Activated T-helper 1 cell treated with anti-CD3 and anti-CD28 coated beads, Interleukin-12 subunit alpha, Interleukin-12 subunit beta, Interleukin-2, Interleukin-4 antibody, amounts not matched to agents 30 ng/mL and 10 ng/mL and 1 ng/mL, durations not matched to agents 14 hours and 24 hours and 36 hours (primary cell): ENCODE measurements at regions of chr16 and their contacts with region 1.

Region 1: DNA sequence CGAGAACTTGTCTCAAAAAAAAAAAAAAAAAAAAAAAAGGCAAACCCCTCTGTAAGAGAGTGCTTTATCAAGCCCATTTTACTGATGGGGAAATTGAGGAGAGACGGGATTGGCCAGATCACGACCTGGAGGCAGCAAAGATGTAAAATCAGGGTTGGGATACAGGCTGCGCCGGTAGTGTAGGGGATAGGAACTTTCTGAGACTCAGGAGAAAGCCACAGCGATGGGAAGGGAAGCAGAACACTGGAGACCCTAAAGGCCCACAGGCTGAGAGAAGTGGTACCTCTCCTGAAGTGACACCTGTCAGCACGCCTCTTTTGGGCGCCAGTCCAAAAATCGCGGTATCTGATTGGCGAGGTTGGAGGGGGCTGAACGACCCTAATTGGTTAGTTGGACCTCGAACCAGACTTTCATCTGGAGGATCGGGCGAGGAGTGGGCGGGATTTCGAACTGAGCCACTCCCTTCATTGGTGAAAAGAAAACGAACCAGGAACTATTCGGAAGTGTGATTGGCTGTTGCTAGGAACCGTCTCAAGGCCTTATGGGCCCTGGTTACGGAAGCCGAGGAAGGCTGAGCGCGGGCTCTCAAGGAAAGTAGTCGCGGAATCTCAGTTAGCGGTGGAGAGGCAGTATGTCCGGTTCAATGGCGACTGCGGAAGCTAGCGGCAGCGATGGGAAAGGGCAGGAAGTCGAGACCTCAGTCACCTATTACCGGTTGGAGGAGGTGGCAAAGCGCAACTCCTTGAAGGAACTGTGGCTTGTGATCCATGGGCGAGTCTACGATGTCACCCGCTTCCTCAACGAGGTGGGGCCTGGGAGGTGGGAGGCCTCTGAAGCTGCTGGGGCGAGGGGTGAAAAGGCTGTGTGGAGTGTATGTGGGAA is at the start of gene CYB5B:
- DNase-seq: peak; percentile 91
- H3K4me3 Mint-ChIP-seq: peak within 1 kb of the TSS; percentile 92
- H3K27ac Mint-ChIP-seq: peak within 1 kb of the TSS; percentile 90
- H3K4me1 Mint-ChIP-seq: peaks cover 25% of the 10 kb centered on the region
- H3K27me3 Mint-ChIP-seq: no peaks in the 10 kb centered on the region
- total RNA-seq, gene CYB5B: 157 and 166 TPM in 2 replicates

Region 2: DNA sequence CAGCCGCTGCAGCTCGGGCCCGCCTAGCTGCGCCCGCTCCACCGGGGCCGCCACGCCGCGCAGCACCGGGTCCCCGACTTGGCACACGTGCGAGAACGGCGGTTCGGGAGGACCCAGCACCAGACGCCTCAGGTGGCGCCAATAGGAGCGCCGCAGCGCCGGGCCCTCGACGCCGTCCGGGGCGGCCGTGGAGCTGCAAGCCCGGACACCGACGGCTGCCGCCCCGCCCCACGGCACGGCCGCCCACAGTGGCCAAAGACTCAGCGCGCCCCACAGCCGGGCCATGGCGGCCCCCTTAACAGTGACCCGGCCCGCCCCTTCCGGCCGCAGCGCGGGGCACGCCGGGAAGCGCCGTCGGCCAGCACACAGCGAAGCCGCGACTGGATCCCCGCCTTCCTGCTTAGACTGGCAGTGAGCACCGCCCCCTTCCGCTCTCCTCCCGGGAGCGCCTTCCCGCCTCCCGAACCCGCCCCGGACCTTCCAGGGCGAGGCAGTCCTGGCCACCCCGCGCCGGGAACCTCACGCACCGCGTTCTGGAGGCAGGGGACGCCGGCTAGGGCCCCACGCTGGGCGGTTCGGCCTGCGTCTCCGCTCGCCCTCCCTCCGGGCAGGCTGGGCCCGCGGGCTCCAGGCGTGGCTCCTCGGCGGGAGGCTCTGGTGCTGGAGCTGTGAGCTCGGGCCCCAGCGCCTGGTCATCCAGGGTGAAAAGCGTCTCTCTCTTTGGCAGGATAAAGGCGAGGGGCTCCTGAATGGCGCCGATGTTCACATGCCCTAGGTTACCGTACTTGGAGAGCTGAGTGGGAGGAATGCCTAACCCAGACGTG is 93.8 kb before region 1 on chr16 and contains the start of gene PDF:
- intact Hi-C with region 1: loop called (anchors 1 kb)
- DNase-seq: peak; percentile 86
- H3K4me3 Mint-ChIP-seq: peak within 1 kb of the TSS; percentile 84
- H3K27ac Mint-ChIP-seq: peak within 1 kb of the TSS; percentile 63
- H3K4me1 Mint-ChIP-seq: peaks cover 36% of the 10 kb centered on the region
- H3K27me3 Mint-ChIP-seq: no peaks in the 10 kb centered on the region
- total RNA-seq, gene PDF: 17.4 and 21.5 TPM in 2 replicates

Region 3: DNA sequence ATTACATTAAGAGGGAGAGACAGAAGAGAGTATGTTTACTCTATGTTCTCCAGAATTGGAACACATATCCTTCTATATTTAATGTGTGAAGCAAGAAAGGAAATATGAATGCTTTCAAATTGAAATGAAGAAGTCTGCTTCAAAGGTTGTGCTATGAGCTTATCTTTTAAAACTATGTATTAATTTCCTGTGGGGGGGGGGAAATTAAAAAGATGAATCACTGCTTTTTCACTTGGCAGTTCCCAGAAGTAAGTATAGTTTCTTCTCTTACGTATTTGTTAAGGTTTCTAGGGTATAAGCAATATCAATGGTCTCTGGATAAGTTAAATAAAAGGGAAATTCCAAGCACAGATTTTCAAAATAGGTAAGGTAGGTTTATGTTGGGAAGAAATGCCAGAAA is 45.5 kb before region 1 on chr16:
- intact Hi-C with region 1: no loop called
- DNase-seq: no peak
- H3K4me3 Mint-ChIP-seq: no peak overlapping the region
- H3K27ac Mint-ChIP-seq: no peak overlapping the region
- H3K4me1 Mint-ChIP-seq: peaks cover 24% of the 10 kb centered on the region
- H3K27me3 Mint-ChIP-seq: no peaks in the 10 kb centered on the region

Region 4: GRCh38 chr16:69396187-69397061 is 27.9 kb before region 1 on chr16:
- intact Hi-C with region 1: loop called (anchors 1 kb)
- DNase-seq: peak; percentile 60
- H3K4me3 Mint-ChIP-seq: no peak overlapping the region
- H3K27ac Mint-ChIP-seq: peak overlapping the region; percentile 18
- H3K4me1 Mint-ChIP-seq: peaks cover 17% of the 10 kb centered on the region
- H3K27me3 Mint-ChIP-seq: peaks cover 5% of the 10 kb centered on the region

Region 5: DNA sequence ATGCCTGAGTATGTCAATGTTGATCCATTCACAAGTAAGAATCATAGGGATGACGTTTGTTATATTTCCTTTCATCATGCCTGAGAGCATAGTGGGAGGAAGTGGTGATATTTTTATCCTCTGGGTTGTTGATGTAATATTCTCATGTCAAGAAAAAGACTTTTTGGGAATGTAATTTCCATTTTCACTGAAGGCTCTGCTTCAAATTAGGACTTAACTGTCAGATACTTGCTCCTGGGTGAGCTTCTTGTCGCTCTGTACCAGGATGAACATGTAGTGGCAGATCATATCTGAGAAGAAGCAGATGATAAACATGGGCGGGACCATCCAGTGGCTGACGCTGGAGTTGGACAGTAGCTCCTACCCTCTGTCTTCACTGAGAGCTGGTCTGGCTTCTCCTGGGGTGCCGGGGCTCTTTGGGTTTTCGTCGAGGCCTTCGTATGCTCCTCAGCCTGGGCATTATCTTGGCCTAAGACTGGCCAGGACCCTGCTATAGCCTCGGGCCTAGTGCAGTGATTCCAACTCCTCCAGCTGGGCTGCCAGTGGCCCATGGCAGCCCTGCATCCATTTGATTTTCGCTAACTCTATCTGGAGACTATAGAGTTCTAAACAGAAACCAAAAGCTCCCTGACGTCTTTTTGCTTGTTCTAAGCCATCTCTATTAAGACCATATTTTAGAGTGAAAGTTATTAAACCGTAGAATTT is 19.8 kb after region 1 on chr16:
- intact Hi-C with region 1: loop called (anchors 1 kb)
- DNase-seq: no peak
- H3K4me3 Mint-ChIP-seq: peak overlapping the region; percentile 74
- H3K27ac Mint-ChIP-seq: peak overlapping the region; percentile 90
- H3K4me1 Mint-ChIP-seq: peaks cover 54% of the 10 kb centered on the region
- H3K27me3 Mint-ChIP-seq: no peaks in the 10 kb centered on the region

Region 6: DNA sequence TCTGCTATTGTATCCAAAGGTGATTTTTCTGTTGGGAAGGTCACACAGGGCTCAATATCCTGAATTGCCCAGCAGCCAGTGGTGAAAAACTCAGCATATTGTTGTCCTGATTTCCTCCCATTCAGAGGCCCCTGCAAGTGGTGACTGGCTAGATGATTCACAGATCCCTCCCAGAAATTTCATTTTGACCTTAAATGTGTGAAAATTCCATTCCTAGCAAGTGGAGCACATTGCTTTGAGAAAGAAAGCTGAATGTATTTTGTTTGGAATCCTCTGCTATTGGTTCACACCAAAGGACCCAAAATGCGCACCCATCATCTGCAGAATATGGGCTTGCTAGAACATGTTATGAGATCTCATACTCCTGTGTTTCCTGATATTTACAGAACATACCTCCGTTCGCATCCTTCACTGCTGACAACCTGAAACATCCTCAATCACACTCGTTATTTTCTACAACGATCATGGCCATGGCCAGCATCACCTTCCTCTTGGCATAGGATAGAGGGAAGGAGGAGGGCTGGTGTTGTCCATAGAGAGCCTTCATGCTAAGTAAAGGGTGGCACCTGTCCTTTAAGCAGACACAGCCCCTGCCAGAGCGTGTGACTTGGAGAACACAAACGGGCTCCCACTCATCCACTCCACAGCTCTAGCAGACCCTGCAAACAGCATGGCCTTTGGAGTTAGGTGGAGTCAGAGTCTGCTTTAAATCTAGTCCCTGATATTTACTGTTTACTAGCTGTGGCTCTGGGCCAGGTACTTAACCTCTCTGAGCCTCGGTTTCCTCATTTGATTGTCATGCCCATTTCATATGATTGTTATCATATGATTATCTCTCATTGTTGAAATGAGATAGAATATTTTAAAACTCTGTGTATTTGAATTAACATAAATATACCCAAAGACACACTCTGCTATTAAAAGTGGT is 111.1 kb after region 1 on chr16:
- intact Hi-C with region 1: loop called (anchors 1 kb)
- DNase-seq: no peak
- H3K4me3 Mint-ChIP-seq: no peak overlapping the region
- H3K27ac Mint-ChIP-seq: no peak overlapping the region
- H3K4me1 Mint-ChIP-seq: peaks cover 19% of the 10 kb centered on the region
- H3K27me3 Mint-ChIP-seq: no peaks in the 10 kb centered on the region